B cell (primary cell): ENCODE measurements at regions of chr15 and their contacts with region 1.

Region 1: GRCh38 chr15:74460871-74461846 is at the start of gene UBL7:
- DNase-seq: peak; percentile 96
- ATAC-seq: peak; percentile 95
- H3K4me3 ChIP-seq: peak within 1 kb of the TSS; percentile 78 to 99 (median 90)
- H3K4me3 Mint-ChIP-seq: peak within 1 kb of the TSS; percentile 92
- H3K27ac ChIP-seq: peak within 1 kb of the TSS; percentile 77 to 80
- H3K27ac Mint-ChIP-seq: peak within 1 kb of the TSS; percentile 76
- H3K4me1 ChIP-seq: peaks cover 30 to 40% of the 10 kb centered on the region in 2 donors
- H3K4me1 Mint-ChIP-seq: peaks cover 39% of the 10 kb centered on the region
- H3K27me3 ChIP-seq: no peaks in the 10 kb centered on the region
- H3K27me3 Mint-ChIP-seq: no peaks in the 10 kb centered on the region
- CTCF ChIP-seq: no peak
- total RNA-seq, gene UBL7: 44.4 and 50.1 TPM in 2 replicates

Region 2: DNA sequence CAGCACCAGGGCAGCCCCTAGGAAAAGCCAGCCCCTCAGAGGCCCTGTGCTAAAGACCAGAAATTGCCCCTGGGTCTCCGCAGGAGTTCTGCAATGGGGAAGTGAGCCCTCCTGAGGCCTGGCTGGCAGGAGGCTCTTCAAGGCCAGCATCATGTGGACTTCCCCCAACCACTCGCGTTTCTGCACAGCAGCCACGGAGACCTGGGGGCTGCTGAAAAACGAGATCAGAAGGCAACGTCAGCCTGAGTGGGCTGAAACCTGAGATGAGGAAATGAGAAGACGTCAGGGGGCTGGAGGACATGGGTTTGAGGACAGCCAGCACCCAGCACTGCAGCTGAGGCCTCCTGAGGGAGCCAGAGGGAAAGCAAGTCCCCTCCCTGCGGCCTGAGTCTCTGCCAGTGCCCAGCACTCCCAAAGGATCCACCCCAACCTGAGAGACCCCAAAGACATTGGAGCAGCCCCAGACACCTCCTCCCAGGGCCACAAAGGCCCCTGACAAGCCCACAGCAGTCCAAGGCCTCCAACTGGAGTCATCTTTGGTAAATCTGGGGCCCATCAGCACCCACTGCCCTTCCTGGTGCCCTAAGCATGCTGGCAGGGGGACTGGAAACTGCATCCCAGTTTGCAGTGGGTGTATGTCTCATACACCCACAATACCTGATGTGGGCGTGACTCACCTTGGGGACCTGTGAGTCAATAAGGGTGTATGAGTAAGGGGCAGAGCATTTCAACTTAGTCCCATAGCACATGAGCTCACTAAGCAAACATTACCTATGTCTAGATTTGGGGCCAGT is 64.5 kb before region 1 on chr15:
- CTCF ChIA-PET with region 1: no interaction called
- POLR2A ChIA-PET with region 1: no interaction called
- intact Hi-C with region 1: loop called (anchors 2 kb)
- DNase-seq: peak; percentile 95
- ATAC-seq: peak; percentile 73
- H3K4me3 ChIP-seq: peak overlapping the region in 2 of 5 experiments; percentile 1 to 49
- H3K4me3 Mint-ChIP-seq: peak overlapping the region; percentile 78
- H3K27ac ChIP-seq: peak overlapping the region; percentile 96 to 98
- H3K27ac Mint-ChIP-seq: peak overlapping the region; percentile 97
- H3K4me1 ChIP-seq: peaks cover 95 to 100% of the 10 kb centered on the region in 2 donors
- H3K4me1 Mint-ChIP-seq: peaks cover 98% of the 10 kb centered on the region
- H3K27me3 ChIP-seq: no peaks in the 10 kb centered on the region
- H3K27me3 Mint-ChIP-seq: no peaks in the 10 kb centered on the region
- CTCF ChIP-seq: peak; percentile 10

Region 3: DNA sequence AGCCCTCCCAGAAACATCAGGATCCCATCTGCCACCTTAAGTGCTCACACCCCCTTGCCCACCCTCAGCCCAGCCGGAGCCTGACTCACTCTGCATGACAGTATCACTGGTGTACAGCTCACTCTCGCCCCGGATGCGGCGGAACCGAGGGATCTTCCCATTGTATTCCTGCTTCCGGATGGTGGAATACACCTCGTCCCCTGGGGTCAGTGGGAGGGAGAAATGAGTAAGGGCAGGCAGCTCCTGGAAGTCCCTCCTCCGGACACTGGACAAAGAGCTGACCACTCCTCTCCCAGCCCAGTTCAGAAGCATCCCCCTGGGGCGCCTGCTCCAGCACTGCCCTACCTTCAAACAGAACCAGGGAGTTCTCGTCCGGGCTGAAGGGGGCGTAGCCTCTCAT is 43.9 kb before region 1 on chr15:
- CTCF ChIA-PET with region 1: no interaction called
- POLR2A ChIA-PET with region 1: no interaction called
- intact Hi-C with region 1: no loop called
- DNase-seq: no peak
- ATAC-seq: no peak
- H3K4me3 ChIP-seq: no peak overlapping the region
- H3K4me3 Mint-ChIP-seq: no peak overlapping the region
- H3K27ac ChIP-seq: peak overlapping the region in 1 of 2 donors; percentile 16
- H3K27ac Mint-ChIP-seq: peak overlapping the region; percentile 63
- H3K4me1 ChIP-seq: peaks cover 35 to 67% of the 10 kb centered on the region in 2 donors
- H3K4me1 Mint-ChIP-seq: peaks cover 61% of the 10 kb centered on the region
- H3K27me3 ChIP-seq: no peaks in the 10 kb centered on the region
- H3K27me3 Mint-ChIP-seq: no peaks in the 10 kb centered on the region
- CTCF ChIP-seq: no peak

Region 4: DNA sequence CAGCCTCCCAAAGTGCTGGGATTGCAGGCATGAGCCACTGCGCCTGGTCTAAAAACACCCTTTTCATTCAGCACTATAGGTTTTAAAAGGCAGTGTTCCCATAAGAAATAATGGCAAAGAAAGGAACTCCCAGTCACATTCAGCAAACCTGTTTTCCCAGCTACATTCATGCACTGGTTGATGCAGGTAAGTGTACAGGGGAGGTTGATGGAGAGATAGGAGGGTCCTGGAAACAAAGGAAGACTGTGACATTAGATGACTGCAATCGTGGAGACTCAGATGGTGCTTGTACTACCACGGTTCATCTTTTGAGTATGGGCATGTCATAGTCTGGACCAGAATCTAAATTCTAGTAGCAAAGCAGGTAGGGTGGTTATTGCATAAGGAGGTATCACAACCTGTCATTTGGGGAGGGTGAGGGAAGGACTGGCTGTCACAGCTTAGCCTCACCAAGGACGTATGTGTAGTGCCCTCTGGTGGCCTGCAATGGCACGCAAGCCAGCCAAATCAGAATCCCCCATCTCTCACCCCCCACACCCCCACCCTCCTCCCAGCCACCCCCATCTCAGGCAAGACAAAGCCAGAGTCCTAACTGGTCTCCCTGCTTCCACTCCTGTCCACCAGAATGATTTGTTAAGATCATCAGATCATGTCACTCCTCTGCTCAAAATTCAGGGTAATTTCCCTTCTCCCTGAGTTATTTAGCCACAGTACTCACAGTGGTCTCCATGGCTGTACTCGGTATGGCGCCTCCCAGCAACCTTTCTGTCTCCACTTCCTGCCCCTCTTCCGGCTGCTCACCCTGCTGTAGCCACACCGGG is 28.6 kb after region 1 on chr15:
- CTCF ChIA-PET with region 1: interaction called, 12 read pairs
- POLR2A ChIA-PET with region 1: no interaction called
- intact Hi-C with region 1: no loop called
- DNase-seq: peak; percentile 82
- ATAC-seq: peak; percentile 96
- H3K4me3 ChIP-seq: no peak overlapping the region
- H3K4me3 Mint-ChIP-seq: peak overlapping the region; percentile 13
- H3K27ac ChIP-seq: no peak overlapping the region
- H3K27ac Mint-ChIP-seq: no peak overlapping the region
- H3K4me1 ChIP-seq: peaks cover 10% of the 10 kb centered on the region in 2 donors
- H3K4me1 Mint-ChIP-seq: peaks cover 11% of the 10 kb centered on the region
- H3K27me3 ChIP-seq: no peaks in the 10 kb centered on the region
- H3K27me3 Mint-ChIP-seq: no peaks in the 10 kb centered on the region
- CTCF ChIP-seq: peak; percentile 78

Region 5: GRCh38 chr15:74531144-74531811 is 70.1 kb after region 1 on chr15:
- CTCF ChIA-PET with region 1: no interaction called
- POLR2A ChIA-PET with region 1: no interaction called
- intact Hi-C with region 1: no loop called
- DNase-seq: no peak
- ATAC-seq: no peak
- H3K4me3 ChIP-seq: no peak overlapping the region
- H3K4me3 Mint-ChIP-seq: no peak overlapping the region
- H3K27ac ChIP-seq: no peak overlapping the region
- H3K27ac Mint-ChIP-seq: no peak overlapping the region
- H3K4me1 ChIP-seq: no peaks in the 10 kb centered on the region
- H3K4me1 Mint-ChIP-seq: no peaks in the 10 kb centered on the region
- H3K27me3 ChIP-seq: no peaks in the 10 kb centered on the region
- H3K27me3 Mint-ChIP-seq: no peaks in the 10 kb centered on the region
- CTCF ChIP-seq: no peak

Region 6: DNA sequence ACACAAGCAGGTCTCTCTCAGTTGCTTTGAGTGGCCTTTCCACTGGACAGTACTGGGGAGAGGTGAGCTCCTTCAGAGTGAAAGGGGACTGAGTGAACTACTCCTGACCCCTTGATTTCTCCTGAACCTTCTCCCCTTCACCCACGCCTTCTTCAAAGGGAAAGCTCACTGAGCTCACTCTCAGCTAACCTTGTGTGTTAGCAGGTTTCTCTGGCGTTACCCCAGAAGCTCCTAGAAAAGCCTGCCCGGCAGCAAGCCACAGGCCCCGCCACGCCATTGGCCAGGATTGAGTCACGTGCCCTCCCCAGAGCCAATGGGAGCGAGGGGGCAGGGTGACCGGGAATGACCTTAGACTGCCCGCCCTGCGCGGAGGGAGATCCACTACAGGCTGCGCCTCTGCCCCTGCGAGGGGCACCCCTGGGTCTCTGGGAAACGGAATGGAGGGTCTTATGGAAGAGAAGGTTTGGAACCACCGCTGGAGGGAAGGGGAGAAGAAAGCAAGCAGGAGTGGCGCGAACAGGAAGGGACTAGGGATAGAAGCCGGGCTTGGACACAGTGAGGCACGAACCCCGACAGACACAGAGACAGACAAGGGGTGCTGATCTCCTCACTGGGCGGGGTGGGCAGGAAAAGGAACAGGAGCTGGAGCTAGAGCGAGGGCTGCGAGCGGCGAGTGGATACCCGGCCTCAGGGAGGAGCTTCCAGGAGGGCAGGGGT is 137.1 kb after region 1 on chr15:
- CTCF ChIA-PET with region 1: no interaction called
- POLR2A ChIA-PET with region 1: no interaction called
- intact Hi-C with region 1: loop called (anchors 2 kb)
- DNase-seq: peak; percentile 86
- ATAC-seq: peak; percentile 100
- H3K4me3 ChIP-seq: peak overlapping the region; percentile 71 to 93 (median 79)
- H3K4me3 Mint-ChIP-seq: peak overlapping the region; percentile 100
- H3K27ac ChIP-seq: peak overlapping the region; percentile 68 to 78
- H3K27ac Mint-ChIP-seq: peak overlapping the region; percentile 97
- H3K4me1 ChIP-seq: peaks cover 3 to 15% of the 10 kb centered on the region in 2 donors
- H3K4me1 Mint-ChIP-seq: peaks cover 14% of the 10 kb centered on the region
- H3K27me3 ChIP-seq: no peaks in the 10 kb centered on the region
- H3K27me3 Mint-ChIP-seq: no peaks in the 10 kb centered on the region
- CTCF ChIP-seq: no peak